PC-9 (cell line): ENCODE measurements at regions of chr1 and their contacts with region 1.

Region 1: DNA sequence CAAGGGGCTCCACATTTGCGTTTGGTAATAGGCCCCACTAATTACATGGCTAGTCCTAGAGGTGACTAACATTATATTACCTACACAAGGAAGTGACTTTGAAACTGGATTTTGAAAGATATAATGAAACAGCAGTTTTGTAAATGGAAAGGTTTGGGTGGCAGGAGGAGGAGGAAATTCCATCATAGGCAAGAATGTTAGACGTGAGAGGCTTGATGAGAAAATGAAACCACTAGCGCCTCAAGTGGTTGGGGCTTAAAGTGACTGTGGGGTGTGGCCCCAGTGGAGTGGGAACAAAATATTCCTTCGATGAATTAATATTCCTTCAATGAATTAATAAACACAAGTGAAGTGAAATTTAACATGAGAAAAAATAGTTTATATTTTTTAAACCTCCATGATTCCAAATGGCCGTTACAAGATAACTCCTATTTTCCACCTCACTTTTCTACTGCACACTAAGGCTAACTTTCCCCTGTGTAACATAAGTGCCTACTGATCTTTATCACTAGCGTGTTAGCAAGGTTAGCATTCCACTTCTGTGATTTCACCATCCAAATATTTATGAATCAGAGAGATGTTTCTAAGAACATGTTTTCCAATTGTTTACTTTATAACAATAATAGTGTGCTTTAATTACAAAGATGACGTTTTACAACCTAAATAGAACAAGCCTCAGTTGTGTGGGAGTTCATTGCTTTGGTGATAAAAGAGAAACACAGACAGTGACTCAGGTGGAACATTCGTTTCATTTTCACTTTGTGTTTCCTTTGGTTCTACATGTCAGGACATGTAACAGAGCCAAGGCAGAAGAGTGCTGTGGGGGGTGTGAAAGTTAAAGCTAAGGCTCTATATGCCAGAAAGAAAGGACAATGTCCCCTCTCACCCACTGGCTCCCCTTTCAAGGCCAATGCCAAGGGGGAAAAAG is 12.5 kb upstream of the ATF3 start:
- DNase-seq: peak; percentile 61 to 99
- H3K4me3 ChIP-seq: peak overlapping the region; percentile 29
- H3K27ac ChIP-seq: peak overlapping the region; percentile 84
- H3K4me1 ChIP-seq: peaks cover 31% of the 10 kb centered on the region
- H3K27me3 ChIP-seq: 0 out of 2 replicates have a peak, but pooled peaks cover 13% of the 10 kb centered on the region
- CTCF ChIP-seq: peak; percentile 94

Region 2: GRCh38 chr1:211735208-211736170 is 860.6 kb before region 1 on chr1:
- CTCF ChIA-PET with region 1: no interaction called
- POLR2A ChIA-PET with region 1: no interaction called
- intact Hi-C with region 1: loop called (anchors 10 kb)
- DNase-seq: peak; percentile 89 to 95
- H3K4me3 ChIP-seq: peak overlapping the region; percentile 24; the same call in 1 of the 2 replicates
- H3K27ac ChIP-seq: peak overlapping the region; percentile 72
- H3K4me1 ChIP-seq: peaks cover 45% of the 10 kb centered on the region
- H3K27me3 ChIP-seq: no peaks in the 10 kb centered on the region
- CTCF ChIP-seq: no peak

Region 3: DNA sequence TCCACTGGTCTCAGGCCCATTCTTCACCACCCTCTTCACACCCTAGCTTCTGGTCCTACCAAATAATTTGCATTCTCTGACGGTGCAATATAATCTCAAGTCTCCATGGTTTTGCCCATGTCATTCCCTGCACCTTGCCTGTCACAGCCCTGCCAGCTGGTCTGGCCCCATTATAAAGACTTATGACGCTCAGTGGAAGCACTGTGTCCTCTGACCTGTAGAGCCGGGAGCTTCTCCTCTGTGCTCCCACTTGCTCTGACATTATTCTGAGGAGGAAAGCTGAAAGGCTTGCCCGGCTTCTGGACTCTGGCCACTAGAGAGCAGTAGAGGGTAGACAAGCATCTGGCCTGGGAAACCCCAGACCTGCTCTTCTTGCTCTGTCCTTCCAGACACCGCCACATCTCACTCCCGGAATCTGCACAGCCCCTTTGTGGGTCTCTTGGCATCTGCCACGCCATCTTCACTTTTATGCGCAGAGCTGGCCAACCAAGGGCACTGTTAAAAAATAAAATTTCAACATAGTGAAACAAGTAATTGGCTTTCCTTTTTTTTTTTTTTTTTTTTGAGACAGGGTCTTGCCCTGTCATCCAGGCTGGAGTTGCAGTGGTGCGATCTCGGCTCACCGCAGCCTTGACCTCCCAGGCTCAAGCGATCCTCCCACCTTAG is 118.9 kb before region 1 on chr1:
- CTCF ChIA-PET with region 1: interaction called, 4 read pairs
- POLR2A ChIA-PET with region 1: interaction called, 5 read pairs
- intact Hi-C with region 1: loop called (anchors 1 kb)
- DNase-seq: peak; percentile 74 to 81
- H3K4me3 ChIP-seq: no peak overlapping the region
- H3K27ac ChIP-seq: no peak overlapping the region
- H3K4me1 ChIP-seq: peaks cover 12% of the 10 kb centered on the region
- H3K27me3 ChIP-seq: no peaks in the 10 kb centered on the region
- CTCF ChIP-seq: peak; percentile 92

Region 4: GRCh38 chr1:212485895-212486590 is 110.0 kb before region 1 on chr1:
- CTCF ChIA-PET with region 1: no interaction called
- POLR2A ChIA-PET with region 1: no interaction called
- intact Hi-C with region 1: loop called (anchors 1 kb)
- DNase-seq: peak; percentile 95 to 100
- H3K4me3 ChIP-seq: no peak overlapping the region
- H3K27ac ChIP-seq: peak overlapping the region; percentile 81
- H3K4me1 ChIP-seq: peaks cover 74% of the 10 kb centered on the region
- H3K27me3 ChIP-seq: no peaks in the 10 kb centered on the region
- CTCF ChIP-seq: no peak

Region 5: DNA sequence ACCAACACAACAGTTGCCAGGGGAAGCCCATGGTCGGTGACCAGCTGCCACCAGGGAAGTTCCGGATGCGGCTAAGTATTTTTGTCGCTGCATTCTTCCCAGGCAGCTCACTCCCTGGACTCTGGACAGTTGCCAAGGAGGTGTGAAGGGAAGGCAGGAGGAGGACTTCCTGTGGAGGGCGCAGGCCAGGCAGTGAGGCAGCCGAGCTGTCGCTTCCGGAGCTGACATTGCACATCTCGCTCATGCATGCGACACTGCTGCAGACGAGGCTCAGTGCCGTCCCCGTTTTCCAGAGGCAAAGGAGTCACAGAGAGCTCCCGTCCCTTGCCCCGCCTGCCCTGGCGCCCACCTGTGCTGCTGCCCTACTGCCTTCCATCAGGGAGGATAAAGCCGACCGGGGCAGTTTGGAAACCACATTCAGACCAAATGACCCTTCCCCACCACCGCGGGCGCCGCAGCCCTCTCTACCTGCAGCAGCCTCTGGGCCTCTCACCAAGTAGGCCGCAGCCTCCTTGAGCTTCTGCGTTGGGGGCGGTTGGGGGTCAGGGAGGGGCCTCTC is 81.9 kb before region 1 on chr1:
- CTCF ChIA-PET with region 1: no interaction called
- POLR2A ChIA-PET with region 1: no interaction called
- intact Hi-C with region 1: loop called (anchors 1 kb)
- DNase-seq: peak; percentile 83 to 96
- H3K4me3 ChIP-seq: peak overlapping the region; percentile 25; the same call in 1 of the 2 replicates
- H3K27ac ChIP-seq: peak overlapping the region; percentile 76
- H3K4me1 ChIP-seq: peaks cover 28% of the 10 kb centered on the region
- H3K27me3 ChIP-seq: no peaks in the 10 kb centered on the region
- CTCF ChIP-seq: no peak; the same call in 1 of the 2 replicates

Region 6: DNA sequence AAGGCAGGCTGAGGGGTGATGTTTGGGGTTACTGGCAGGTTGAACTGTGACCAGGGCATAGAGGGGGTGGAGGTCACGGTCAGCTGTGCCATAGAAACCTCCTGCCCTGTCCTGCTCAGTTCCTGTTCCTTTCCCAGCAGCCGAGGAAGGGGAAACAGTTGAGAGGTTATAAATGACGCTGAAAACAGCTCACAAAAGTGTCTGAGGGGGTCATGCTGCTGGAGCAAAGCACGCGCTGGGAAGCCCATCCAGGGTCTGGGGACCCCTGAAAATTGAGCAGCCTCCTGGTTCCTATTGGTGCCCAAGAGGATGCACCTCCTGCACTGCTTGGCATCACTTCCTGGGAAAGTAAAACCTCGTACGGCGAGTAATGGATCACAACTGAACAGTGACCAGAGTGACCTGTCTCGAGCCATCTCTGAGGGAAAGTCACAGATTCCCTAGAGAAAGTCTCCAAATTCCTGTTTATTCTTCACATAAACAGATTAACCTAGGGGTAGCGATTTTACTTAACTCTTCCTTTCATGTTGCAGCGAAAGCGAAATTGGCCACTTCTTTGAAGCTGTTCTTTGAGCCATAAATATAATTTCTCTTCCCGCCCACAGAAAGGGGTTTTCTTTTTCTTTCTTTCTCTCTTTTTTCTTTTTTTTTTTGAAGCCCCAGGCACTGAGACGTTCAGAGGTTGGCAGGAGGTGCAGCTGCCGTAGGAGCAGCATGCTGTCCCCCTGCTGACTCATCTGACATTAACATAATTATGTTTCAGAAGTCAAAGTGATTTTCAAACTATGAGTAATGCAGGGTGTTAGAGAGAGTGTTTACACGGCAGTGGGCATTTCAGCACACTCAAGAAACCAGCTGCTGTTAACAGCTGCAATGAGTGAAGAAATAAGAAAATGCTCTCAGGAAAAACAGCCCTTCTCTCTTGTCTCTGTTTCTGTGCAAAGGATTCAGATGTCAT is 29.2 kb before region 1 on chr1:
- CTCF ChIA-PET with region 1: no interaction called
- POLR2A ChIA-PET with region 1: no interaction called
- intact Hi-C with region 1: loop called (anchors 2 kb)
- DNase-seq: peak; percentile 51 to 94
- H3K4me3 ChIP-seq: peak overlapping the region; percentile 52
- H3K27ac ChIP-seq: peak overlapping the region; percentile 17; the same call in 1 of the 2 replicates
- H3K4me1 ChIP-seq: peaks cover 27% of the 10 kb centered on the region
- H3K27me3 ChIP-seq: no peaks in the 10 kb centered on the region
- CTCF ChIP-seq: no peak